Caco-2 (cell line): ENCODE measurements at regions of chr12 and their contacts with region 1.

Region 1: GRCh38 chr12:18430425-18431048 is 169.2 kb downstream of the PIK3C2G start:
- DNase-seq: peak; percentile 62 to 78
- H3K4me3 ChIP-seq: no peak overlapping the region
- H3K4me3 Mint-ChIP-seq: no peak overlapping the region
- H3K27ac Mint-ChIP-seq: no peak overlapping the region
- H3K4me1 ChIP-seq: no peaks in the 10 kb centered on the region
- H3K4me1 Mint-ChIP-seq: no peaks in the 10 kb centered on the region
- H3K27me3 ChIP-seq: no peaks in the 10 kb centered on the region
- H3K27me3 Mint-ChIP-seq: no peaks in the 10 kb centered on the region
- CTCF ChIP-seq: peak; percentile 93 to 96

Region 2: GRCh38 chr12:18643681-18644080 is 213.1 kb after region 1 on chr12:
- CTCF ChIA-PET with region 1: interaction called, 16 read pairs
- POLR2A ChIA-PET with region 1: interaction called, 5 read pairs
- intact Hi-C with region 1: loop called (anchors 1 kb)
- DNase-seq: no peak
- H3K4me3 ChIP-seq: no peak overlapping the region
- H3K4me3 Mint-ChIP-seq: no peak overlapping the region
- H3K27ac Mint-ChIP-seq: no peak overlapping the region
- H3K4me1 ChIP-seq: no peaks in the 10 kb centered on the region
- H3K4me1 Mint-ChIP-seq: no peaks in the 10 kb centered on the region
- H3K27me3 ChIP-seq: no peaks in the 10 kb centered on the region; the same call in 1 of the 2 replicates
- H3K27me3 Mint-ChIP-seq: peaks cover 18% of the 10 kb centered on the region
- CTCF ChIP-seq: no peak

Region 3: GRCh38 chr12:18805516-18806248 is 375.1 kb after region 1 on chr12:
- CTCF ChIA-PET with region 1: no interaction called
- POLR2A ChIA-PET with region 1: no interaction called
- intact Hi-C with region 1: loop called (anchors 5 kb)
- DNase-seq: no peak
- H3K4me3 ChIP-seq: no peak overlapping the region
- H3K4me3 Mint-ChIP-seq: no peak overlapping the region
- H3K27ac Mint-ChIP-seq: no peak overlapping the region
- H3K4me1 ChIP-seq: no peaks in the 10 kb centered on the region
- H3K4me1 Mint-ChIP-seq: no peaks in the 10 kb centered on the region
- H3K27me3 ChIP-seq: no peaks in the 10 kb centered on the region
- H3K27me3 Mint-ChIP-seq: no peaks in the 10 kb centered on the region
- CTCF ChIP-seq: peak in 1 of 2 experiments; percentile 42

Region 4: GRCh38 chr12:19186722-19187661 is 756.5 kb after region 1 on chr12:
- CTCF ChIA-PET with region 1: no interaction called
- POLR2A ChIA-PET with region 1: no interaction called
- intact Hi-C with region 1: loop called (anchors 1 kb)
- DNase-seq: peak in 1 of 2 experiments; percentile 50
- H3K4me3 ChIP-seq: no peak overlapping the region
- H3K4me3 Mint-ChIP-seq: no peak overlapping the region
- H3K27ac Mint-ChIP-seq: no peak overlapping the region
- H3K4me1 ChIP-seq: no peaks in the 10 kb centered on the region
- H3K4me1 Mint-ChIP-seq: peaks cover 15% of the 10 kb centered on the region
- H3K27me3 ChIP-seq: no peaks in the 10 kb centered on the region
- H3K27me3 Mint-ChIP-seq: no peaks in the 10 kb centered on the region
- CTCF ChIP-seq: peak; percentile 57 to 85

Region 5: DNA sequence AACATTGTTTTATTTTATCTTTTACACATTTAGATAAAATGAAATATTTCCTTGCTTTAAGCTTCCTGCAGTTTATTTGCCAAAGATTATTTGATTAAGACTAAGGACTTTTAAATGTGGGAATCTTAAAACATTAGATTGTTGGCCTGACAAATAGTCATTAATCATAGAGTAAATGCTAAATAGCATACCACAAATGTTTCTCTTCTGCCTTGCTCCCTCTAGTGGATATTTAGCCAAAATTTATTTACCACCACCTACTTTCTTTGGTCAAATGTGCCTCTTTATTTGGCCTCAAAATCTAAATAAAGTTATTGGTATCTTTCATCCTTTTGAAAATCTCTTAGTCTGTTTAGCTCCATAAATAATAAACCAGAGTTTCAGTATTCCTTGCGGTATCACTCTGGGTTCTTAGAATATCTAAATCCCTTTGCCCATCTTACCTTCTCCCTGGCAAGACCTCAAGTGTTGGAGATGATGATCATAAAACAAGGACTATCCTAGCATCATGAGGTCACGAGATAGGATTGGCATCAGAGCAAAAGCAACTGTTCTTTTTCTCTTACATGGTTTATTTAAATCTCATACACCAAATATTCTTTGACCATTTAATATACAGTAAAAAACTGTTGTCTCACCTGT is 858.2 kb after region 1 on chr12:
- CTCF ChIA-PET with region 1: no interaction called
- POLR2A ChIA-PET with region 1: no interaction called
- intact Hi-C with region 1: loop called (anchors 2 kb)
- DNase-seq: peak in 1 of 2 experiments; percentile 30
- H3K4me3 ChIP-seq: no peak overlapping the region
- H3K4me3 Mint-ChIP-seq: no peak overlapping the region
- H3K27ac Mint-ChIP-seq: no peak overlapping the region
- H3K4me1 ChIP-seq: peaks cover 4% of the 10 kb centered on the region; the same call in 1 of the 2 replicates
- H3K4me1 Mint-ChIP-seq: no peaks in the 10 kb centered on the region
- H3K27me3 ChIP-seq: no peaks in the 10 kb centered on the region
- H3K27me3 Mint-ChIP-seq: no peaks in the 10 kb centered on the region
- CTCF ChIP-seq: peak; percentile 73 to 83